Activated naive CD4-positive, alpha-beta T cell treated with anti-CD3 and anti-CD28 coated beads for 36 hours (primary cell): ENCODE measurements at regions of chr10 and their contacts with region 1.

Region 1: GRCh38 chr10:12348870-12349628 is at the start of gene CAMK1D:
- DNase-seq: peak; percentile 86
- H3K4me3 Mint-ChIP-seq: peak within 1 kb of the TSS; percentile 95
- H3K27ac Mint-ChIP-seq: peak within 1 kb of the TSS; percentile 91
- H3K4me1 Mint-ChIP-seq: peaks cover 35% of the 10 kb centered on the region
- H3K27me3 Mint-ChIP-seq: peaks cover 4% of the 10 kb centered on the region
- total RNA-seq, gene CAMK1D: 9.5 to 11.3 TPM

Region 2: GRCh38 chr10:12121673-12122072 is 227.4 kb before region 1 on chr10:
- CTCF ChIA-PET with region 1: no interaction called
- intact Hi-C with region 1: loop called (anchors 2 kb)
- DNase-seq: no peak
- H3K4me3 Mint-ChIP-seq: no peak overlapping the region
- H3K27ac Mint-ChIP-seq: peak overlapping the region; percentile 98
- H3K4me1 Mint-ChIP-seq: peaks cover 30% of the 10 kb centered on the region
- H3K27me3 Mint-ChIP-seq: no peaks in the 10 kb centered on the region

Region 3: DNA sequence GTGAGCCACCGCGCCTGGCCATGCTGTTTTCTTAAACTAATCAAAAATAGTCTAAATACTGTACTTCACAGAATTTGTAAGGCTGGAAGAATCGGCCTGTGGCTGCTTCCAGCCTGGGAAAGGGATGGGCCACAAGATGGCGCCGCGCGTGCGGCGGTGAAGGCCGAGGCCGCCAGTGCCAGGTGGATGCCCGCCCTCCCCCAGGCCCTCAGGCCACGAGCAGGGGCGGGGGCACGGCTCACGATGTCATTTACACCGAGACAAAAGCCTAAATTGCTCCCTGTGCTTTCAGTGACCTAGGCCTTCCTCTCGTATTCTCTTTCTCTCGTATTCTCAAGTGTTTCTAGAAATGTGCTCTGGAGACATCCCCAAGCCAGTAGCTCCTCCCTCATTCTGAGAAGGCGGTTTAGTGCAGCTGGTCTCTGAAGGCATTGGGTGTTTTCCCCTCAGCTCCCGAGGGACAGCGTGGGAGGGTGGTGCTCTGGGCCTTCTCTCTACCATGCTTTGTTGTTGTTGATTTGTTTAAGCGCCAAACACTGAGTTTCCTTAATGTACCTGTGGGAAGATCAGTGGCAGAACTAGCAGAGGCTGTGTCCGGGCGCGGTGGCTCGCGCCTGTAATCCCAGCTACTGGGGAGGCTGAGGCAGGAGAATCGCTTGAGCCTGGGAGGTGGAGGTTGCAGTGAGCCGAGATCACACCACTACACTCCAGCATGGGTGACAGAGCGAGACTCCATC is 84.7 kb before region 1 on chr10:
- CTCF ChIA-PET with region 1: interaction called, 3 read pairs
- intact Hi-C with region 1: loop called (anchors 2 kb)
- DNase-seq: peak; percentile 84
- H3K4me3 Mint-ChIP-seq: peak overlapping the region; percentile 58
- H3K27ac Mint-ChIP-seq: peak overlapping the region; percentile 79
- H3K4me1 Mint-ChIP-seq: peaks cover 17% of the 10 kb centered on the region
- H3K27me3 Mint-ChIP-seq: no peaks in the 10 kb centered on the region

Region 4: GRCh38 chr10:12419262-12419847 is 70.3 kb after region 1 on chr10:
- CTCF ChIA-PET with region 1: no interaction called
- intact Hi-C with region 1: loop called (anchors 1 kb)
- DNase-seq: peak; percentile 90
- H3K4me3 Mint-ChIP-seq: no peak overlapping the region
- H3K27ac Mint-ChIP-seq: peak overlapping the region; percentile 46
- H3K4me1 Mint-ChIP-seq: peaks cover 30% of the 10 kb centered on the region
- H3K27me3 Mint-ChIP-seq: no peaks in the 10 kb centered on the region

Region 5: GRCh38 chr10:12466704-12467305 is 117.8 kb after region 1 on chr10:
- CTCF ChIA-PET with region 1: no interaction called
- intact Hi-C with region 1: loop called (anchors 5 kb)
- DNase-seq: peak; percentile 17
- H3K4me3 Mint-ChIP-seq: no peak overlapping the region
- H3K27ac Mint-ChIP-seq: no peak overlapping the region
- H3K4me1 Mint-ChIP-seq: peaks cover 20% of the 10 kb centered on the region
- H3K27me3 Mint-ChIP-seq: no peaks in the 10 kb centered on the region

Region 6: GRCh38 chr10:12656518-12657142 is 307.6 kb after region 1 on chr10:
- CTCF ChIA-PET with region 1: interaction called, 4 read pairs
- intact Hi-C with region 1: loop called (anchors 1 kb)
- DNase-seq: no peak
- H3K4me3 Mint-ChIP-seq: no peak overlapping the region
- H3K27ac Mint-ChIP-seq: no peak overlapping the region
- H3K4me1 Mint-ChIP-seq: peaks cover 2% of the 10 kb centered on the region
- H3K27me3 Mint-ChIP-seq: no peaks in the 10 kb centered on the region